GM12878 (cell line): ENCODE measurements at regions of chrX and their contacts with region 1.

Region 1: DNA sequence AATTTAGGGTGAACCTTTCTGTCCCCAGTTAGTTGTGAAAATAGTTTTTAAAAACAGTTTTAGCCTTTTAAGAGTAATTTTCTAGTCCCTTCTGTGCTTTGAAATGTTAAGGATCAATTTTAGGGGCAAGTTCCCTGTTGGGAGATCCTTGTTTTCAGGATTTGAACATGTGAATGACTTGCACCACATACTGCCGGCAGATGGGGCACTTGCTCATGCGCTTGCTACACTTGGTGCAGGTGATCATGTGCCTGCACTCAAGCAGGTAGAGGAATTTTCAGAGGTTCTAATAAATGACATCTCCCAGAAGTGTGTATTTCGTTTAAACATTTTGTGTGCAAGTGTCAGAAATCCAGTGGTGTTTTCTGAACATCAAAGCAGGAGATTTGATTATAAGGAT is 195.9 kb downstream of the CHM start:
- DNase-seq: no peak
- ATAC-seq: peak; percentile 70
- H3K4me3 ChIP-seq: no peak overlapping the region
- H3K27ac ChIP-seq: no peak overlapping the region
- H3K4me1 ChIP-seq: no peaks in the 10 kb centered on the region
- H3K27me3 ChIP-seq: no peaks in the 10 kb centered on the region
- CTCF ChIP-seq: peak; percentile 33 to 45 (median 42); a peak in 5 of 6 replicates
- EP300 ChIP-seq: no peak
- POLR2A ChIP-seq: no peak
- RAD21 ChIP-seq: peak; percentile 66

Region 2: GRCh38 chrX:85828771-85829170 is 22.6 kb before region 1 on chrX:
- CTCF ChIA-PET with region 1: no interaction called
- POLR2A ChIA-PET with region 1: no interaction called
- RAD21 ChIA-PET with region 1: no interaction called
- SMC1A ChIA-PET with region 1: no interaction called
- in situ Hi-C with region 1: no loop called
- intact Hi-C with region 1: no loop called
- DNase-seq: no peak
- ATAC-seq: no peak
- H3K4me3 ChIP-seq: no peak overlapping the region
- H3K27ac ChIP-seq: no peak overlapping the region
- H3K4me1 ChIP-seq: no peaks in the 10 kb centered on the region
- H3K27me3 ChIP-seq: no peaks in the 10 kb centered on the region
- CTCF ChIP-seq: no peak
- EP300 ChIP-seq: no peak
- POLR2A ChIP-seq: no peak
- RAD21 ChIP-seq: no peak

Region 3: DNA sequence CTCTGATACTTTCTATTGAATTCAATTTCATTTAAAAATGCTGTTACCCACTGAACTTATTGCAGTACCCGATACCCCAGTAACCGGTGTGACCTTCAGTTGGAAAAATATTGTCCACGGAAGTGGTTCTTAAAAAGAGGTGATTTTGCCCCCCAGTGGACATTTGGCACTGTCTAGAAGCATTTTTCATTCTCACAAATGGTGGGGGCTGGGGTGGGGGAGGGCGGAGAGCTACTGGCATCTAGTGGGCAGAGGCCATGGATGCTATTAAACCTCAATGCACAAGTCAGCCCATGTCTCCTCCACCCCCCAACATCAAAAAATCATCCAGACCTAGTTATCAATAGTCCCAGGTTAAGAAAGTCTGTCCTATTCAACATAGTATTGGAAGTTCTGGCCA is 215.6 kb after region 1 on chrX:
- CTCF ChIA-PET with region 1: no interaction called
- POLR2A ChIA-PET with region 1: no interaction called
- RAD21 ChIA-PET with region 1: no interaction called
- SMC1A ChIA-PET with region 1: no interaction called
- in situ Hi-C with region 1: no loop called
- intact Hi-C with region 1: loop called (anchors 10 kb)
- DNase-seq: no peak
- ATAC-seq: peak; percentile 37; the same call in 2 of the 3 replicates
- H3K4me3 ChIP-seq: no peak overlapping the region
- H3K27ac ChIP-seq: no peak overlapping the region
- H3K4me1 ChIP-seq: no peaks in the 10 kb centered on the region
- H3K27me3 ChIP-seq: no peaks in the 10 kb centered on the region
- CTCF ChIP-seq: 0 out of 6 replicates have a peak, but pooled peaks of 1 of the 3 experiments have one; percentile 0
- EP300 ChIP-seq: no peak
- POLR2A ChIP-seq: no peak
- RAD21 ChIP-seq: no peak